ENCODE measurements at regions of chr1 and their contacts with region 1.

Region 1: GRCh38 chr1:36385410-36386257 is at the start of gene STK40:
- DNase-seq: peak; percentile 98
- ATAC-seq: peak; percentile 92
- H3K4me3 ChIP-seq: peak within 1 kb of the TSS; percentile 92 to 98 (median 97)
- H3K27ac ChIP-seq: peak within 1 kb of the TSS; percentile 99
- H3K4me1 ChIP-seq: peaks cover 59% of the 10 kb centered on the region
- H3K27me3 ChIP-seq: no peaks in the 10 kb centered on the region; a peak in 1 of 5 replicates
- CTCF ChIP-seq: no peak; the same call in 1 of the 2 replicates
- EP300 ChIP-seq: no peak
- POLR2A ChIP-seq: peak in 1 of 2 experiments; percentile 46; a peak in 1 of 4 replicates
- RAD21 ChIP-seq: no peak
- total RNA-seq, gene STK40: 33.8 and 40.1 TPM in 2 replicates

Region 2: DNA sequence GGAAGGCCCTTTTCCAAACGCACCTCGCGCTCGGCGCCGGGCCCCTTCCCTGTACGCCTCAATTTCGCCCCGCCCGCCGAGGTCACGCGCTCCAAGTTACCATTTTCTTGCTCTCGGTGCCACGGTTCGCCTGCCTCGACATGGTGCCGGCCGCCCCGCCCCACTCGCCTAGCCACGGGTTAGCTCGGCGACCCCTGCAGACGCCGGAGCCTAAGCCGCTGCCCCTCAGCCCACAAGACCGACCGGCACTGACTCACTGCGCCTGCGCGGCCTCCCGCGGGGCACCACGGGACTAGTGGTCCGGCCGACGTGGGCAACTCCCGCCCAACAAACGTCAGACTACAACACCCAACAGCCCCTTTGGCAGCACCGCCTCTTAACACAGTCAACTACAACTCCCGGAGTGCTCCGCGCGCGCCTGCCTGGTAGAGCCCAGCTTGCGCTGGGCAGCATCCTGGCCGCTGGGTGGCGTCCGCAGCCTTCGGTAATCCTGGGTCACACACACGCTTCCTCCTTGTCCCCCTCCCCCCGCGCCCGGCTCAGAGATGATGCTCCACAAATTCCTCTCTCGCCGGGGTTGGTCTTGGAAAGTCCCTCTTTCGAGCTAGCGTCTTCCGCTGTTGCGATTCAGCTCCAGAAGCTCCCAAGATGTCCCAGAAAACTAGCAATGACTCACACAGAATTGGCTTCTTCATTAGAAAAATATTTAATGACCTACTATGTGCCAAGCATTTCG is 236.2 kb before region 1 on chr1 and contains the start of gene TRAPPC3:
- CTCF ChIA-PET with region 1: no interaction called
- POLR2A ChIA-PET with region 1: interaction called, 14 read pairs
- in situ Hi-C with region 1: no loop called
- intact Hi-C with region 1: no loop called
- DNase-seq: peak; percentile 99
- ATAC-seq: peak; percentile 88
- H3K4me3 ChIP-seq: peak within 1 kb of the TSS; percentile 76 to 83 (median 81)
- H3K27ac ChIP-seq: peak within 1 kb of the TSS; percentile 80
- H3K4me1 ChIP-seq: peaks cover 58% of the 10 kb centered on the region
- H3K27me3 ChIP-seq: no peaks in the 10 kb centered on the region
- CTCF ChIP-seq: peak; percentile 98
- EP300 ChIP-seq: no peak
- POLR2A ChIP-seq: peak in 1 of 2 experiments; percentile 72; a peak in 2 of 4 replicates
- RAD21 ChIP-seq: peak; percentile 99
- total RNA-seq, gene TRAPPC3: 62.4 and 66.7 TPM in 2 replicates

Region 3: GRCh38 chr1:36306902-36307456 is 78.7 kb before region 1 on chr1:
- CTCF ChIA-PET with region 1: no interaction called
- POLR2A ChIA-PET with region 1: interaction called, 18 read pairs
- in situ Hi-C with region 1: no loop called
- intact Hi-C with region 1: no loop called
- DNase-seq: peak; percentile 90
- ATAC-seq: peak; percentile 94
- H3K4me3 ChIP-seq: peak overlapping the region; percentile 82 to 88 (median 85)
- H3K27ac ChIP-seq: peak overlapping the region; percentile 88
- H3K4me1 ChIP-seq: peaks cover 29% of the 10 kb centered on the region
- H3K27me3 ChIP-seq: no peaks in the 10 kb centered on the region
- CTCF ChIP-seq: peak; percentile 31; the same call in 1 of the 2 replicates
- EP300 ChIP-seq: no peak
- POLR2A ChIP-seq: peak; percentile 96 to 99
- RAD21 ChIP-seq: no peak

Region 4: GRCh38 chr1:36323597-36324352 is 61.9 kb before region 1 on chr1 and contains the start of gene EVA1B:
- CTCF ChIA-PET with region 1: no interaction called
- POLR2A ChIA-PET with region 1: interaction called, 18 read pairs
- in situ Hi-C with region 1: no loop called
- intact Hi-C with region 1: no loop called
- DNase-seq: peak; percentile 88
- ATAC-seq: peak; percentile 90
- H3K4me3 ChIP-seq: peak within 1 kb of the TSS; percentile 72 to 82 (median 72)
- H3K27ac ChIP-seq: peak within 1 kb of the TSS; percentile 62
- H3K4me1 ChIP-seq: peaks cover 46% of the 10 kb centered on the region
- H3K27me3 ChIP-seq: no peaks in the 10 kb centered on the region; a peak in 1 of 5 replicates
- CTCF ChIP-seq: peak; percentile 17; the same call in 1 of the 2 replicates
- EP300 ChIP-seq: peak in 1 of 2 experiments; percentile 28; a peak in 1 of 4 replicates
- POLR2A ChIP-seq: peak; percentile 94 to 95
- RAD21 ChIP-seq: peak; percentile 22; the same call in 1 of the 2 replicates
- total RNA-seq, gene EVA1B: 3.8 and 6.6 TPM in 2 replicates

Region 5: GRCh38 chr1:36369061-36369861 is 16.4 kb before region 1 on chr1:
- CTCF ChIA-PET with region 1: no interaction called
- POLR2A ChIA-PET with region 1: interaction called, 10 read pairs
- in situ Hi-C with region 1: no loop called
- intact Hi-C with region 1: no loop called
- DNase-seq: peak; percentile 57
- ATAC-seq: peak; percentile 58
- H3K4me3 ChIP-seq: no peak overlapping the region
- H3K27ac ChIP-seq: no peak overlapping the region
- H3K4me1 ChIP-seq: peaks cover 36% of the 10 kb centered on the region
- H3K27me3 ChIP-seq: no peaks in the 10 kb centered on the region
- CTCF ChIP-seq: peak; percentile 90
- EP300 ChIP-seq: no peak
- POLR2A ChIP-seq: no peak
- RAD21 ChIP-seq: peak; percentile 79

Region 6: GRCh38 chr1:36420836-36421664 is 35.4 kb after region 1 on chr1:
- CTCF ChIA-PET with region 1: no interaction called
- POLR2A ChIA-PET with region 1: interaction called, 6 read pairs
- in situ Hi-C with region 1: no loop called
- intact Hi-C with region 1: loop called (anchors 5 kb)
- DNase-seq: peak; percentile 56
- ATAC-seq: peak; percentile 95
- H3K4me3 ChIP-seq: no peak overlapping the region
- H3K27ac ChIP-seq: no peak overlapping the region
- H3K4me1 ChIP-seq: peaks cover 13% of the 10 kb centered on the region
- H3K27me3 ChIP-seq: no peaks in the 10 kb centered on the region
- CTCF ChIP-seq: peak; percentile 97
- EP300 ChIP-seq: no peak
- POLR2A ChIP-seq: no peak
- RAD21 ChIP-seq: peak; percentile 88

Region 7: GRCh38 chr1:36463803-36464604 is 78.4 kb after region 1 on chr1 and contains the start of gene MRPS15:
- CTCF ChIA-PET with region 1: no interaction called
- POLR2A ChIA-PET with region 1: interaction called, 14 read pairs
- in situ Hi-C with region 1: no loop called
- intact Hi-C with region 1: no loop called
- DNase-seq: peak; percentile 90
- ATAC-seq: peak; percentile 86
- H3K4me3 ChIP-seq: peak within 1 kb of the TSS; percentile 83 to 91 (median 90)
- H3K27ac ChIP-seq: peak within 1 kb of the TSS; percentile 93
- H3K4me1 ChIP-seq: peaks cover 55% of the 10 kb centered on the region
- H3K27me3 ChIP-seq: no peaks in the 10 kb centered on the region; a peak in 1 of 5 replicates
- CTCF ChIP-seq: no peak
- EP300 ChIP-seq: peak; percentile 80 to 94
- POLR2A ChIP-seq: peak; percentile 95 to 97
- RAD21 ChIP-seq: peak; percentile 26; the same call in 1 of the 2 replicates
- total RNA-seq, gene MRPS15: 113 and 137 TPM in 2 replicates